ENCODE measurements at regions of chr5 and their contacts with region 1.

Region 1: DNA sequence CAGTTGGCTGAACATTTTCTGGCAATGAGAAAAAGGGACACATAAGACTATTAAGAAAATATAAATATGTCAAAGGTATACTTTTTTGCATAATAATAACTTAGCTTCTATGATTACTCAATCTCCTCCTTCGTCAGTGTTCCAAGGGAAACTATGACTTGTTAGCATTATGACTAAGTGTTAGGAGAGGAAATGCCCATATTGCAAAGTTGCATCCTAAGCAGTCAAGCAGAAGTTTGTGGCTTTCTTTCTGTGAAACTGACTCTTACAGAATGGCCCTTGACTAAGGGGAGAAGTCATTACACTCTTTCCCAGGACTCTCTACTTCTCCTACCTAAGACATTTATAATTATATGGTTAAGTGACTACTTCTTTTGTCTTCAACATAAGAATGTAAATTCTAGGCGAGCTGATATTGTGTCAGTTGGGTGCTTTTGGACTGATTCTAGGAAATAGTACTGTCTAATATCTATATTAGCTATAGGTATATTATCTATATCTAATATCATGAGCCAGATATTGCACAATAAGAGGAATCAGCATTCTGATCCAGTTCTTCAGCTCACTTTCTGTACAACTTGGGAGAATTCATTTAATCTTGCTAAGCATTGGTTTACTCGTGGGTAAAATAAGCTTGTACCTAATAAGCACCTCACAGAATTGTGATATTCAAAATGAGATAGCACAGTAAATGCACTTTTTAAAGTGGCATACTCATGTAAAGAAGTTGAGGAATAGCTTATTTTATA is 16.4 kb upstream of the SPINK6 start:
- DNase-seq: peak; percentile 90
- ATAC-seq: peak; percentile 100
- H3K4me3 ChIP-seq: no peak overlapping the region
- H3K27ac ChIP-seq: peak overlapping the region; percentile 50
- H3K4me1 ChIP-seq: peaks cover 12% of the 10 kb centered on the region
- H3K27me3 ChIP-seq: no peaks in the 10 kb centered on the region
- CTCF ChIP-seq: no peak

Region 2: GRCh38 chr5:148268556-148268955 is 82.1 kb after region 1 on chr5 and contains the start of gene SPINK13:
- CTCF ChIA-PET with region 1: no interaction called
- POLR2A ChIA-PET with region 1: no interaction called
- intact Hi-C with region 1: loop called (anchors 5 kb)
- DNase-seq: peak; percentile 95
- ATAC-seq: peak; percentile 100
- H3K4me3 ChIP-seq: no peak within 1 kb of the TSS
- H3K27ac ChIP-seq: peak within 1 kb of the TSS; percentile 36
- H3K4me1 ChIP-seq: peaks cover 10% of the 10 kb centered on the region
- H3K27me3 ChIP-seq: no peaks in the 10 kb centered on the region
- CTCF ChIP-seq: no peak
- total RNA-seq, gene SPINK13: 3.0 TPM in 1 of 2 replicates, not detected in the other

Region 3: GRCh38 chr5:148364343-148364742 is 177.9 kb after region 1 on chr5:
- CTCF ChIA-PET with region 1: no interaction called
- POLR2A ChIA-PET with region 1: no interaction called
- intact Hi-C with region 1: no loop called
- DNase-seq: no peak
- ATAC-seq: peak; percentile 45; the same call in 1 of the 2 replicates
- H3K4me3 ChIP-seq: no peak overlapping the region
- H3K27ac ChIP-seq: no peak overlapping the region
- H3K4me1 ChIP-seq: no peaks in the 10 kb centered on the region
- H3K27me3 ChIP-seq: no peaks in the 10 kb centered on the region
- CTCF ChIP-seq: no peak

Region 4: DNA sequence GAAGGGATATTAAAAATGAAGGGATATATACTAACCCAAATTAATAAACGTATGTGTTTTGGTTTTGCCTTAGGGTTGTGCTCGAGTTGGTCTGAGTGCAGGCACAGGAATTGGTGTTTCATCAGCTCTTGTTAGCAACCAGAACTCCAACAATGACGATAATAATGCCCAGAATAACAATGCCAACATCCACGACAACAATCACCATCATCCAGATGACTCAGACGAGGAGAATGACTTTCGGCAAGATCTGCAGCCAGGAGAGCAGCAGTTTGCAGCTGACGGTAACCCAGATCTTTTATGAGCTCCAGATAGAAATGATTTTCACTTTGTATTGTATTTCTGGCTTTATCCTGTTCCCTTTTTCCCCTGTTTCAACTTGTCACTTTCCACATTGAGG is 230.5 kb after region 1 on chr5:
- CTCF ChIA-PET with region 1: no interaction called
- POLR2A ChIA-PET with region 1: no interaction called
- intact Hi-C with region 1: no loop called
- DNase-seq: peak; percentile 63
- ATAC-seq: peak; percentile 91
- H3K4me3 ChIP-seq: no peak overlapping the region
- H3K27ac ChIP-seq: peak overlapping the region; percentile 23; the same call in 1 of the 2 replicates
- H3K4me1 ChIP-seq: 0 out of 2 replicates have a peak, but pooled peaks cover 4% of the 10 kb centered on the region
- H3K27me3 ChIP-seq: no peaks in the 10 kb centered on the region
- CTCF ChIP-seq: no peak